Tibial artery (tissue), 4 donors: ENCODE measurements at regions of chr9 and their contacts with region 1.

Region 1: GRCh38 chr9:109821711-109822110 is 41.7 kb downstream of the PALM2AKAP2 start:
- DNase-seq: no peak
- H3K4me3 ChIP-seq: no peak overlapping the region
- H3K27ac ChIP-seq: no peak overlapping the region
- H3K4me1 ChIP-seq: peaks cover 0 to 22% (median 15%) of the 10 kb centered on the region in 4 donors
- H3K27me3 ChIP-seq: no peaks in the 10 kb centered on the region
- CTCF ChIP-seq: no peak

Region 2: DNA sequence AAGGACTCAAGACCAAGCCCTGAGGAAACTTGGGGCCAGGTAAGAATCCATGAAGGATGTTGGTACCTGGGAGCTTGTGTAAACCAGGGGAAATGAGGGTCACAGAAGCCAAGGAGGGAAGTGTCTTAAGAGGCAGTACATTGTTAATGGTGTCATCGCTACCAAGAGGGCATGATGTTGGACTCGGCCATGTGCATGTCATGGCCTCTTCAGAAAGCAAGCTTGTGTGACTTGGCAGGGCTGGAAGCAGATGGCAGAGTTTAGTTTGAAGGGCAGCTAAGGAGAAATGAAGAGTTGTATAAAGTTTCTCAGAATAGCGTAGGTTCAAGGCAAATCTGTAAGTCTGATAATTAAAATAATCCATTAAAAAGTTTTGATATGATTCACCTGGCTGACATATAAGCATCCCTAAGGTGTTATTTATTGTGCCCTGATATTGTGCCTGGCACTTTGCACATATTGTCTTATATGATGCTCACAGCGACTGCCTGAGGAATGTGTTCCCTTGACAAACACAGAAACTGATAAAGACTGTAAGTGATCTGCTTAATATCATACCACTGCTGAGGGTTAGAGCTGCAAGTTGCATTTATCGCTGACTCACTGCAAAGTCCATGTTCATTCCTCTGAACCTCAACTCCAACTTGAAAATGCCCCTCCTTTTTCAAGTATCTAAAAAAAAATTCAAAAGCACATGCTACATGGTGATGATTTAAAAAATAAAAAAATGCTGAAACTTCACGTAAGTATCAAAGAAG is 242.3 kb before region 1 on chr9:
- intact Hi-C with region 1: loop called (anchors 5 kb)
- DNase-seq: no peak
- H3K4me3 ChIP-seq: no peak overlapping the region
- H3K27ac ChIP-seq: no peak overlapping the region
- H3K4me1 ChIP-seq: no peaks in the 10 kb centered on the region
- H3K27me3 ChIP-seq: no peaks in the 10 kb centered on the region
- CTCF ChIP-seq: no peak

Region 3: DNA sequence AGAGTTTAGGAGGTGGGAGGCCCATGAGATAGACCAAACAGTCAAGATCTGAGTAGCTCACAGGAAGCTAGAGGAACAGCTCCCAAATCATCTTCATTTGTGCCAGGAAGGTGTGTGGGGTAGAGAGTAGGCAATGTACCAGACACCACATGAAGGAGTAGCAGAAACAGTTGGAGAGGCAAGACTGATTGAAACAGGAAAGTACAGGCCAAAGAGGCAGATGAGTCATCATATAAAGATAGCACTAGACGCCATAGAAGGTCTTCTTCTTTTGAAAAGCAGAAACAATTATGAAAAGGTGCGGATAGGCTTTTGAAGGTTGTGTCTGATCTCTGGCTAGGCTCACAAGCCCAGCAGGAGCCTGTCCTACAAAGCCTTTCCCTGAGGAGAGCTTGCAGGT is 104.4 kb before region 1 on chr9:
- intact Hi-C with region 1: no loop called
- DNase-seq: no peak
- H3K4me3 ChIP-seq: no peak overlapping the region
- H3K27ac ChIP-seq: no peak overlapping the region
- H3K4me1 ChIP-seq: peaks cover 0 to 4% (median 0%) of the 10 kb centered on the region in 4 donors
- H3K27me3 ChIP-seq: no peaks in the 10 kb centered on the region
- CTCF ChIP-seq: no peak

Region 4: DNA sequence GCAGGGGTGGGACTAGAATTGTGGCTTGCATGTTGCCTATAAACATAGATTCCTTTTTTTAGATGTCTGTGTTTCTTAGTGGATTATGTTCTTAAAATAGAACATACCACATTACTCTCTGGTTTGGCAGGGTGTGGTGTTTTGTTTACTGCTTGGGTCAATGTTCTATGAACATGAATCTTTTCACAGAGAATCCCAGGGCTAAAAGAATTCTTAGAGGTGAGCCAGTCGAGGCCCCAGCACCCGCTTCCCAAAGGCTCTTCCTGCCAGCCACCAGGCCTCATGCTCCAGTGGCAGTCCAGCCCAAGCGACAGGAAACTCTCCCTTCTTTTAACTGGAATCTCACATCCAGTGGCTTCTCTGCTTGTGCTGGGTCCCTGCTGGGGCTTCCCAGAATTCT is 259.7 kb after region 1 on chr9:
- intact Hi-C with region 1: no loop called
- DNase-seq: no peak
- H3K4me3 ChIP-seq: no peak overlapping the region
- H3K27ac ChIP-seq: peak overlapping the region; percentile 66 to 74
- H3K4me1 ChIP-seq: peaks cover 0 to 63% (median 17%) of the 10 kb centered on the region in 4 donors
- H3K27me3 ChIP-seq: no peaks in the 10 kb centered on the region
- CTCF ChIP-seq: no peak

Region 5: DNA sequence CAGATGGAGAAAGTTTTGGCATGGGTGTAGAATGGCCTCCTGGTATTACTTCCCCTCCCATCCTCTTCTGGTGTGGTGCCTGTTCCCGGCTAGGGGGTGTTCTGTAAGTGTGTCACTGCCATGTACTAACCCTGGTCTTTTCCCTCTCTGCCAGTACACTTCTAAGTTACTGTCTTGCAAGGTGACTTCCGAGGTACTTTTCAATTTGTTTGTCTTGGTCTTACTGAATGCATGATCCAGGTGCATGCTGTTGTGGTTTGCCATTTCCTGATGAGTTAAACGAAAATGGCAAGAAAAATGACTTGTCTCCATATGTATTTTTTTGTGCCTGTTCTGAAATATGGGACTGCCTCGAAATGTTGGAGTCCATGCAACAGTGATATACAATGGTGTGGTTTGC is 340.2 kb after region 1 on chr9:
- intact Hi-C with region 1: loop called (anchors 10 kb)
- DNase-seq: no peak
- H3K4me3 ChIP-seq: no peak overlapping the region
- H3K27ac ChIP-seq: no peak overlapping the region
- H3K4me1 ChIP-seq: peaks cover 0 to 34% (median 12%) of the 10 kb centered on the region in 4 donors
- H3K27me3 ChIP-seq: no peaks in the 10 kb centered on the region
- CTCF ChIP-seq: no peak